ENCODE measurements at regions of chr6 and their contacts with region 1.

Region 1: GRCh38 chr6:43774776-43775534 is 4.9 kb downstream of the VEGFA start:
- DNase-seq: peak; percentile 75
- ATAC-seq: no peak
- H3K4me3 Mint-ChIP-seq: no peak overlapping the region
- H3K27ac Mint-ChIP-seq: no peak overlapping the region
- H3K4me1 Mint-ChIP-seq: peaks cover 36% of the 10 kb centered on the region
- H3K27me3 Mint-ChIP-seq: no peaks in the 10 kb centered on the region

Region 2: GRCh38 chr6:43708860-43709653 is 65.9 kb before region 1 on chr6:
- CTCF ChIA-PET with region 1: interaction called, 10 read pairs
- DNase-seq: no peak
- ATAC-seq: peak; percentile 29
- H3K4me3 Mint-ChIP-seq: no peak overlapping the region
- H3K27ac Mint-ChIP-seq: peak overlapping the region; percentile 8
- H3K4me1 Mint-ChIP-seq: peaks cover 32% of the 10 kb centered on the region
- H3K27me3 Mint-ChIP-seq: peaks cover 44% of the 10 kb centered on the region

Region 3: GRCh38 chr6:43723737-43724295 is 51.1 kb before region 1 on chr6:
- CTCF ChIA-PET with region 1: interaction called, 67 read pairs
- DNase-seq: peak; percentile 82
- ATAC-seq: peak; percentile 80
- H3K4me3 Mint-ChIP-seq: no peak overlapping the region
- H3K27ac Mint-ChIP-seq: no peak overlapping the region
- H3K4me1 Mint-ChIP-seq: peaks cover 29% of the 10 kb centered on the region
- H3K27me3 Mint-ChIP-seq: peaks cover 23% of the 10 kb centered on the region

Region 4: GRCh38 chr6:44064089-44064947 is 289.4 kb after region 1 on chr6:
- CTCF ChIA-PET with region 1: interaction called, 17 read pairs
- DNase-seq: peak; percentile 56
- ATAC-seq: peak; percentile 56
- H3K4me3 Mint-ChIP-seq: no peak overlapping the region
- H3K27ac Mint-ChIP-seq: no peak overlapping the region
- H3K4me1 Mint-ChIP-seq: peaks cover 9% of the 10 kb centered on the region
- H3K27me3 Mint-ChIP-seq: no peaks in the 10 kb centered on the region

Measured in activated CD8-positive, alpha-beta memory T cell treated with anti-CD3 and anti-CD28 coated beads, Interleukin-2, amount 10 ng/mL, durations not matched to agents 7 days and 5 days (primary cell).